H1 (cell line): ENCODE measurements at regions of chr10 and their contacts with region 1.

Region 1: DNA sequence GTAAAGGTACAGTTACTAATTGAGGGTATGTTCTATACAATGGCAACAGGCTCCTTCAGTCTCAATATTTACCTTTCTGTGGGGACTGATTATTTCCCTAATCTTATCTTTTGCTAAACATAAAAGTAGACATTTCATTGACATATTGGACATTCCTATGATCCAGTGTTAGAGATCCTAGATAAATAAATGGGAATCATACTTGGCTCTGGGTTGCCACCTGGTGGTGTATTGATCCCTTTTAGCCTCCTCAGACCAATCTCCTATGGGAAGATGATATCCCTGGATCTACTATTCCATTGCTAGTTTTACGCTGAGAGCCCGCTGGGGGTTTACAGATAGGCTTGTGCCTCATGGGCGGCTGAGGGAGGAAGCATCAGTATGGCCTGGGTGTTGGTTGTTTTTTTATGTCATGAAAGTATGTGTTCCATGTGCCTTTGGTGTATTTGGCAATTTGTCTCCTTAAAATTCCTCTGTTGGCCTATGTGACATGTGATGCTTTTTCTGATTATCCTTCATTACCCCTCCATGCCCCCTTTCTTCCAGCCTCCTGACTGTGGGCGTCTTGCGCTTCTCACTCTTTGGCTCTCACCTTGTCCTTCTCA is 18.8 kb downstream of the CELF2 start:
- DNase-seq: no peak
- H3K4me3 ChIP-seq: no peak overlapping the region
- H3K27ac ChIP-seq: no peak overlapping the region
- H3K4me1 ChIP-seq: peaks cover 2 to 12% (median 8%) of the 10 kb centered on the region in 4 experiments; a peak in 4 of 7 replicates
- H3K27me3 ChIP-seq: no peaks in the 10 kb centered on the region
- CTCF ChIP-seq: peak in 2 of 3 experiments; percentile 43 to 65; a peak in 3 of 4 replicates
- EP300 ChIP-seq: no peak
- POLR2A ChIP-seq: no peak
- RAD21 ChIP-seq: peak; percentile 71 to 77

Region 2: DNA sequence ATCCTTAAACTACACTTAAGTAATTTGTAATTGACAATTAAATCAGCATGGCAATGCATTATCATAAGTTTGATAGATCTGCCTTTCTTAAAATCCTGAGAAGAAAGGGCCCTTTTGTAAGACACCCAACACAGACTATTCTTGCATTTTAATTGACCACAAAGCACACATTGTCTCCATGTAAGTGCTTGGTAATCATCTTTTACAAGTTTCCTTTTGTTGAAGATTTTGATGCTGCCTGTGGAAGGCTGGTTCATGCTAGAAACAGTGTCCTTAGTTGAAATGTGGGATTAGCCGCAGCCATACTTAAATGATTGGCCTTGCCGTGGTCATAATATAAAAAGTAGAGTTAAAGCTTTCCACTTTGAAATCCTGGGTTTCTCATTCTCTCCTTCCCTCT is 51.1 kb before region 1 on chr10:
- CTCF ChIA-PET with region 1: no interaction called
- POLR2A ChIA-PET with region 1: no interaction called
- DNase-seq: no peak
- H3K4me3 ChIP-seq: no peak overlapping the region
- H3K27ac ChIP-seq: no peak overlapping the region
- H3K4me1 ChIP-seq: peaks cover 0 to 4% (median 1%) of the 10 kb centered on the region in 4 experiments; a peak in 2 of 7 replicates
- H3K27me3 ChIP-seq: no peaks in the 10 kb centered on the region
- CTCF ChIP-seq: no peak
- EP300 ChIP-seq: no peak
- POLR2A ChIP-seq: no peak
- RAD21 ChIP-seq: no peak

Region 3: GRCh38 chr10:11014671-11015445 is 21.7 kb before region 1 on chr10:
- CTCF ChIA-PET with region 1: interaction called, 17 read pairs
- POLR2A ChIA-PET with region 1: interaction called, 5 read pairs
- DNase-seq: no peak
- H3K4me3 ChIP-seq: no peak overlapping the region
- H3K27ac ChIP-seq: no peak overlapping the region
- H3K4me1 ChIP-seq: peaks cover 0 to 8% (median 1%) of the 10 kb centered on the region in 4 experiments; a peak in 3 of 7 replicates
- H3K27me3 ChIP-seq: peaks cover 0 to 3% (median under 1%) of the 10 kb centered on the region in 4 experiments; a peak in 3 of 7 replicates
- CTCF ChIP-seq: no peak
- EP300 ChIP-seq: no peak
- POLR2A ChIP-seq: no peak
- RAD21 ChIP-seq: no peak

Region 4: GRCh38 chr10:11024596-11024995 is 11.9 kb before region 1 on chr10:
- CTCF ChIA-PET with region 1: interaction called, 12 read pairs
- POLR2A ChIA-PET with region 1: interaction called, 3 read pairs
- DNase-seq: no peak
- H3K4me3 ChIP-seq: no peak overlapping the region
- H3K27ac ChIP-seq: no peak overlapping the region
- H3K4me1 ChIP-seq: no peaks in the 10 kb centered on the region
- H3K27me3 ChIP-seq: no peaks in the 10 kb centered on the region
- CTCF ChIP-seq: no peak
- EP300 ChIP-seq: no peak
- POLR2A ChIP-seq: no peak
- RAD21 ChIP-seq: no peak

Region 5: GRCh38 chr10:11097686-11098085 is 61.2 kb after region 1 on chr10:
- CTCF ChIA-PET with region 1: interaction called, 11 read pairs
- POLR2A ChIA-PET with region 1: interaction called, 4 read pairs
- DNase-seq: no peak
- H3K4me3 ChIP-seq: no peak overlapping the region
- H3K27ac ChIP-seq: no peak overlapping the region
- H3K4me1 ChIP-seq: peaks cover 9 to 20% (median 15%) of the 10 kb centered on the region in 4 experiments
- H3K27me3 ChIP-seq: no peaks in the 10 kb centered on the region
- CTCF ChIP-seq: no peak
- EP300 ChIP-seq: no peak
- POLR2A ChIP-seq: no peak
- RAD21 ChIP-seq: no peak